ENCODE measurements at regions of chr2 and their contacts with region 1.

Region 1: GRCh38 chr2:37156857-37157714 is at the start of gene EIF2AK2:
- DNase-seq: peak; percentile 94
- ATAC-seq: peak; percentile 97
- H3K4me3 Mint-ChIP-seq: peak within 1 kb of the TSS; percentile 98
- H3K27ac Mint-ChIP-seq: peak within 1 kb of the TSS; percentile 98
- H3K4me1 Mint-ChIP-seq: peaks cover 44% of the 10 kb centered on the region
- H3K27me3 Mint-ChIP-seq: no peaks in the 10 kb centered on the region
- total RNA-seq, gene EIF2AK2: 113 to 117 TPM

Region 2: GRCh38 chr2:37168217-37168981 is 11.3 kb after region 1 on chr2:
- CTCF ChIA-PET with region 1: interaction called, 24 read pairs
- POLR2A ChIA-PET with region 1: interaction called, 3 read pairs
- DNase-seq: peak; percentile 43
- ATAC-seq: no peak
- H3K4me3 Mint-ChIP-seq: no peak overlapping the region
- H3K27ac Mint-ChIP-seq: no peak overlapping the region
- H3K4me1 Mint-ChIP-seq: no peaks in the 10 kb centered on the region
- H3K27me3 Mint-ChIP-seq: peaks cover under 1% of the 10 kb centered on the region

Region 3: GRCh38 chr2:37196320-37197195 is 39.5 kb after region 1 on chr2 and contains the start of gene CEBPZOS:
- CTCF ChIA-PET with region 1: no interaction called
- POLR2A ChIA-PET with region 1: interaction called, 12 read pairs
- DNase-seq: peak; percentile 92
- ATAC-seq: peak; percentile 86
- H3K4me3 Mint-ChIP-seq: peak within 1 kb of the TSS; percentile 91
- H3K27ac Mint-ChIP-seq: peak within 1 kb of the TSS; percentile 97
- H3K4me1 Mint-ChIP-seq: peaks cover 28% of the 10 kb centered on the region
- H3K27me3 Mint-ChIP-seq: peaks cover 2% of the 10 kb centered on the region
- total RNA-seq, gene CEBPZOS: 35.1 to 36.0 TPM

Region 4: GRCh38 chr2:37231241-37232130 is 74.4 kb after region 1 on chr2 and contains the starts of genes CEBPZ and NDUFAF7:
- CTCF ChIA-PET with region 1: interaction called, 3 read pairs
- POLR2A ChIA-PET with region 1: interaction called, 12 read pairs
- DNase-seq: peak; percentile 90
- ATAC-seq: peak; percentile 93
- H3K4me3 Mint-ChIP-seq: no peak within 1 kb of the TSS
- H3K27ac Mint-ChIP-seq: no peak within 1 kb of the TSS
- H3K4me1 Mint-ChIP-seq: peaks cover 30% of the 10 kb centered on the region
- H3K27me3 Mint-ChIP-seq: no peaks in the 10 kb centered on the region
- total RNA-seq, gene CEBPZ: 46.7 to 54.4 TPM
- total RNA-seq, gene NDUFAF7: 19.7 to 20.0 TPM

Measured in activated CD8-positive, alpha-beta T cell treated with anti-CD3 and anti-CD28 coated beads, Interleukin-2, amount 10 ng/mL, durations not matched to agents 7 days and 5 days (primary cell).